Activated T-helper 1 cell treated with anti-CD3 and anti-CD28 coated beads, Interleukin-12 subunit alpha, Interleukin-12 subunit beta, Interleukin-2, Interleukin-4 antibody, amounts not matched to agents 30 ng/mL and 10 ng/mL and 1 ng/mL, durations not matched to agents 14 hours and 24 hours and 36 hours (primary cell): ENCODE measurements at regions of chr19 and their contacts with region 1.

Region 1: DNA sequence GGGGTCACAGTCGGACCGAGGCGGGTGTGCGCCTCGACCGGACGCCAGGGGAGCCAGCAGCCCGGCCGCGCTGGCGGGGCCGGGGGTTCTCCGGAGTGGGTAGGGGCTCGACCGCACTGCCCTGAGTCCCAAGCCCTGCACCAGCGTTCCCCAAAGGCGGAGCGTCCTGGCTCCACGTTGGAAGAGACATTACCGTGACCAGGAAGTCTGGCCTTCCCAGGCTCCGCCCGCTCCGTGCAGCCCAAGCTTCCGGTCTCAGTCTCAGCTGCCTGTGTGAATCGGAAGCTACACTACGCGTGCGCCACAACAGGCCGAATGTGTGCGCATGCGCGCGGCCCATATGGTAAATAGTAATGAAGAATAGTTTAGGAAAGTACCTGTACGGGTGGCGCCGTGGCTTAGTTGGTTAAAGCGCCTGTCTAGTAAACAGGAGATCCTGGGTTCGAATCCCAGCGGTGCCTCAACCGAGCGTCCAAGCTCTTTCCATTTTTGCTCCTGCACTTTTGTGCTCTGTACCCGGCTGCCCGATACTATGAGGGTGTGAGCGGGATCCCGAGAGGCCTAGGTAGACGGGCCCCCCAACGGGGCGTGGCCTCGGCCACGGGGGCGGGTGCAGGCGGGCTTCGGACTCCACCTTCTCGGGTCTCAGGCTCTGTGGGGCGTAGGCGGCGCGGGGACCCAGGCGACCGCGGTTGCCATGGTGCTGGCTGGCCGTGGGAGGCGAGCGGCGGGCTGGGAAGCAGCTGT is 17.3 kb upstream of the LRP3 start:
- DNase-seq: peak; percentile 97
- H3K4me3 Mint-ChIP-seq: peak overlapping the region; percentile 97
- H3K27ac Mint-ChIP-seq: peak overlapping the region; percentile 97
- H3K4me1 Mint-ChIP-seq: peaks cover 41% of the 10 kb centered on the region
- H3K27me3 Mint-ChIP-seq: peaks cover 9% of the 10 kb centered on the region

Region 2: DNA sequence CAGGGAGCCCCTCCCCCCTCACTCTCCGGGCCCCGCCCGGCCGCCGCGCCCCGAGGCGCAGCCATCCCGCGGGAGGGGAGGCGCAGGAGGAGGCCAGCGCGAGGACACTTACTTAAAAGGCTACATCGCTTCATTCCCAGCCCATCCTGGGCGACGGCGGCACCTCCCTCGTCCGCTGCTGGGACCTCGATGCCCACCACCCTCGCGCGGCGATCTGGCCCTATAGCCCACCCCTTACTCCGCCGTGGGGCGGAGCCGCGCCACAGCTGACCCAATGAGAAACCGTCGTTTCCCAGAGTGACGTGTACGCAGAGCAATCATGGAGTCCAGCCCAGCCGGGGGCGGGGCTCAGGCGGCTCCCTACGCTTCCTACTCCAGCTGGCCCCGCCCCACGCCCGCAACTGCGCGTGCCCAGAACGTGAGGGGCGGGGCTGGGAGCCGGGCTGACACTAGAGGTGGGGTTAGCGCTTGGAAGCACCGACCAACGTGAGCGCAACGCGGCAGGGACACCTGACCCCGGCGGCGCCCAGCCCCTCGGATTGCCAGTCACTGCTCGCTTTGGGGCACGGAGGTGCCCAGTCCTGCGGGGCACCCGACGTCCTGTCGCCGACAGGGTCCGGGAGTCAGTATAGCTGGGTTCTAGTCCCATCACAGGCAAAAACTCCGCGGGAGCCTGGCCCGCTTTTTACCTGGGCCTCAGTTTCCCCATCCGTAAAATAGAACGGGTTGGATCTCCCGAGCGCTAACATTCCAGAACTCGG is 501.7 kb before region 1 on chr19 and contains the start of gene ANKRD27:
- intact Hi-C with region 1: loop called (anchors 2 kb)
- DNase-seq: peak; percentile 98
- H3K4me3 Mint-ChIP-seq: peak within 1 kb of the TSS; percentile 89
- H3K27ac Mint-ChIP-seq: peak within 1 kb of the TSS; percentile 89
- H3K4me1 Mint-ChIP-seq: peaks cover 28% of the 10 kb centered on the region
- H3K27me3 Mint-ChIP-seq: peaks cover 31% of the 10 kb centered on the region
- total RNA-seq, gene ANKRD27: 28.2 and 28.7 TPM in 2 replicates

Region 3: GRCh38 chr19:33080761-33081681 is 95.8 kb before region 1 on chr19 and contains the start of gene GPATCH1:
- intact Hi-C with region 1: loop called (anchors 1 kb)
- DNase-seq: peak; percentile 85
- H3K4me3 Mint-ChIP-seq: peak within 1 kb of the TSS; percentile 98
- H3K27ac Mint-ChIP-seq: peak within 1 kb of the TSS; percentile 90
- H3K4me1 Mint-ChIP-seq: peaks cover 31% of the 10 kb centered on the region
- H3K27me3 Mint-ChIP-seq: no peaks in the 10 kb centered on the region
- total RNA-seq, gene GPATCH1: 11.1 and 13.5 TPM in 2 replicates

Region 4: GRCh38 chr19:33235269-33235995 is 58.6 kb after region 1 on chr19:
- intact Hi-C with region 1: loop called (anchors 2 kb)
- DNase-seq: peak; percentile 58
- H3K4me3 Mint-ChIP-seq: no peak overlapping the region
- H3K27ac Mint-ChIP-seq: no peak overlapping the region
- H3K4me1 Mint-ChIP-seq: no peaks in the 10 kb centered on the region
- H3K27me3 Mint-ChIP-seq: peaks cover 2% of the 10 kb centered on the region

Region 5: DNA sequence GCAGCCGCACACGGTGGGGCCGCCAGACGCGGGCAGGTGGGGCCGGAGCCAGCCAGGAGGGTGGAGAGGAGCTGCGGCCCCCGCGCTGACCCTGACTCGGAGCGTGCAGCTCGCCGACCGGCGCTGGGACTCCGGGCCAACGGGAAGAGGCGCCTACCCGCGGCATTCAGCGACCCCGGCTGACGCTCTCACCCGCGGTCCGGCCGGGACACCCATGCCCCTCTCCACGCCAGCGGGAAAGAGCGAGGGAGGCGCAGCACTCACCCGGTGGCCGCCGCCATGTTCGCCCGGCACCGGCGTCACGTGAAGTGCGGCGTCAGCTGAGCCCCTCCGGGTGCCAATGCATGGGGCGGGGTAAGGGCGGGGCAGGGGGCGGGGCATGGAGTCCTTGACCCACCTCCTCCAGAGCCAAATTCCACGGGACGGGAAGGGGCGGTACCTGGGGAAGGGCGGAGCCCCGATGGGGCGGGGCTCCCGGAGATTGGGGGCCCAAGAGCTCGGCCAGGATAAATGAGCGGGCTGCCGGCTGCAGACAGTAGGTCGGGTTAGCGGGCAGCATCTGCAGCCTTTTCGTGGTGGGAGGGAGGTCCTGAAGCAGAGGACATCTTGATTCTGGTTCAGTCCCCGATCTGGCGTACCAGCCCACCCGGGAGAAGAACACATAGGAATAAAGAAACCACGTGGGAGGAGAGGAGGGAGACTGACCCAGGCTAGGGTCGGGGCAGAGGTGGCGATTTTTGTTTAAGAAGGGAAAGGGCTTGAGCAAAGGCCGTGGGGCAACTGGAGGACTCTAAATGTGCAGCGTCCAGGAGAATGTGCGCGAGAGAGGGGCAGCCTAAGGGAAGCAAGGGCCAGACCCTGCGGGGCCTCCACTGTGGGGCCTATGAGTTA is 344.9 kb after region 1 on chr19 and contains the start of gene PEPD:
- intact Hi-C with region 1: loop called (anchors 1 kb)
- DNase-seq: peak; percentile 66
- H3K4me3 Mint-ChIP-seq: peak within 1 kb of the TSS; percentile 88
- H3K27ac Mint-ChIP-seq: peak within 1 kb of the TSS; percentile 16
- H3K4me1 Mint-ChIP-seq: peaks cover 16% of the 10 kb centered on the region
- H3K27me3 Mint-ChIP-seq: no peaks in the 10 kb centered on the region
- total RNA-seq, gene PEPD: 14.0 and 15.0 TPM in 2 replicates